ENCODE measurements at regions of chr18 and their contacts with region 1.

Region 1: GRCh38 chr18:62637807-62638687 is 77.3 kb upstream of the PHLPP1 start:
- DNase-seq: peak in 1 of 2 experiments; percentile 2
- H3K4me3 ChIP-seq: no peak overlapping the region
- H3K27ac ChIP-seq: no peak overlapping the region
- H3K4me1 ChIP-seq: peaks cover 17% of the 10 kb centered on the region
- H3K27me3 ChIP-seq: no peaks in the 10 kb centered on the region
- CTCF ChIP-seq: peak; percentile 64

Region 2: DNA sequence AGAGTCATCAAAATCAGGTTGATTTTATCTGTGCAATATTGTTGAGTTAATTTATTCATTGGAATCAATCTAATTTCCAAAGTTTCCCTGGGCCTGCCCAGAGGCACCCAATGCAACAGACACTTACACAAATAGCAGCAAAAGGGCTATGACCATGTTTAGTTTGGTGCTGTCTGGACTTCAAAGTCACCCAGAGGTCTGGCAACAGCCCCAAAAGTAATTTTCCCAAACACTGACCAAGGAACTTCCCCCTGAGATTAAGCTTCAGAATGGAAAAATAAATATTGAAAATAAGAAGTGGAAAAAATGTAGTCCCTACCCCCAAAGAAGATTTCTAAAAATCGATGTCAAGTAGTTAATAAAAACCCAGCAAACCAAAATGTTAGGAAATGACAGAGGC is 674.3 kb before region 1 on chr18:
- CTCF ChIA-PET with region 1: no interaction called
- POLR2A ChIA-PET with region 1: no interaction called
- intact Hi-C with region 1: no loop called
- DNase-seq: no peak
- H3K4me3 ChIP-seq: no peak overlapping the region
- H3K27ac ChIP-seq: no peak overlapping the region
- H3K4me1 ChIP-seq: no peaks in the 10 kb centered on the region
- H3K27me3 ChIP-seq: no peaks in the 10 kb centered on the region
- CTCF ChIP-seq: no peak

Region 3: DNA sequence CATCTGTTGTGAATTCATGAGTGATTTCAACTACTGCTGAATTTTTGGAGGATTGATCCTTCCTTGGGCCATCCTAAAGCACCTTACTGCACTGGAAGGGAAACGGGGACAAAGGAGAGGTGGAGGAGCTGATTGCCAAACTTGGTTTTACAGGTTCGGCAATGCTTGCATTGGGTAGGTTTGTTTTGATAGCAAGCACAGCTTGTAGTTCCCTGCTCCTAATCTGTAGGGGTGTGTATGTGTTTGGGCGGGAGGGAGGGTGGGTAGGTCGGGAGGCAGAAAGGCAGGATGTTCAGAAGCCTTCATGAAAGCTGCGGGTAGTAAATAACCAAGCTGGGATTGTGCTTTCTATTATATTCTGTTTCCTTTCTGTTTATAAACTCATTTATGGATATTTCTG is 101.9 kb after region 1 on chr18:
- CTCF ChIA-PET with region 1: no interaction called
- POLR2A ChIA-PET with region 1: interaction called, 38 read pairs
- intact Hi-C with region 1: no loop called
- DNase-seq: no peak
- H3K4me3 ChIP-seq: no peak overlapping the region
- H3K27ac ChIP-seq: no peak overlapping the region
- H3K4me1 ChIP-seq: no peaks in the 10 kb centered on the region; the same call in 1 of the 2 replicates
- H3K27me3 ChIP-seq: no peaks in the 10 kb centered on the region
- CTCF ChIP-seq: no peak